ENCODE measurements at regions of chrX and their contacts with region 1.

Region 1: GRCh38 chrX:119004920-119005524 is 30.6 kb downstream of the LONRF3 start:
- DNase-seq: peak; percentile 30 to 73 (median 54)
- H3K4me3 ChIP-seq: no peak overlapping the region
- H3K27ac ChIP-seq: no peak overlapping the region
- H3K4me1 ChIP-seq: peaks cover 0 to 4% of the 10 kb centered on the region in 2 donors
- H3K27me3 ChIP-seq: peaks cover 3% of the 10 kb centered on the region
- CTCF ChIP-seq: peak; percentile 56 to 94 (median 78)
- POLR2A ChIP-seq: no peak

Region 2: DNA sequence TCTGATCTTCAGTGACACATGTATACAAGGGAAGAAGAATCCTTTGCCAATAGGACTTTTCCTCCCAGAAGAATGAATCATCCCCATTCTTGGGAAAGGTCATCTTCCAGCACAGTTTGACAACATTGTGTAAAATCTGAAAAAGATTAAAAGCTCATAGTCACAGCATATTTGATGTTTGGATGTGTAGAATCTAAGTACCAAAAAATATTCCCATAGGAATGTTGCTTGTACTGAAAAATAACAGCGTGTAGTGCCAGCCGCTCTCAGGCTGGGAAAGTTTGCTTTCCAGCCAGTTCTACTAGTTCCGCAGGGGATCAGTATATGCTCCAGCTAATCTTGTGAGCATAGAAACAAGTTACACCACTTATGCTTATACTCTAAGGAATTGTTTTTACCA is 352.3 kb before region 1 on chrX:
- intact Hi-C with region 1: no loop called
- DNase-seq: no peak
- H3K4me3 ChIP-seq: no peak overlapping the region
- H3K27ac ChIP-seq: no peak overlapping the region
- H3K4me1 ChIP-seq: no peaks in the 10 kb centered on the region
- H3K27me3 ChIP-seq: peaks cover 10% of the 10 kb centered on the region
- CTCF ChIP-seq: no peak
- POLR2A ChIP-seq: no peak

Region 3: DNA sequence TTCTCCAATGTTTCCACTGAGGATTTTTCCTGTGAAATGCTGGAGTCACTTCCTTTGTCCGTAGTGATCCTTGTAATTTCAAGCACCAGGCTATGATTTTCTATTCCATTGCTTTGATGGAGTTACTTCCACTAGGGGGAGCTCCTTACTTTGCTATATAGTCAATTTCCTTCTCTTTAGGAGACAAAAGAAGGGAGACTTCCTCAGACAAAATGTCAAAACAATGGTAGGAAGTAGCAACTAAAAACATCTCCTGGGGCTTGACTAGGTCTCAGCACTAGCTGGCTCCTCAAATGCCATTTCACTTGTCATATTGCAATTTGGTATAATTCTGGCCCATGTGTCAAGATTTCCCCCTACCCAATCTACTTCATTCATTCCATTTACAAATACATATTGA is 157.3 kb before region 1 on chrX:
- intact Hi-C with region 1: loop called in 1 of 2 experiments (anchors 10 kb)
- DNase-seq: no peak
- H3K4me3 ChIP-seq: no peak overlapping the region
- H3K27ac ChIP-seq: no peak overlapping the region
- H3K4me1 ChIP-seq: no peaks in the 10 kb centered on the region
- H3K27me3 ChIP-seq: no peaks in the 10 kb centered on the region
- CTCF ChIP-seq: peak; percentile 51 to 73 (median 68)
- POLR2A ChIP-seq: no peak

Measured in adrenal gland (tissue), 19 donors.